ENCODE measurements at regions of chr15 and their contacts with region 1.

Region 1: DNA sequence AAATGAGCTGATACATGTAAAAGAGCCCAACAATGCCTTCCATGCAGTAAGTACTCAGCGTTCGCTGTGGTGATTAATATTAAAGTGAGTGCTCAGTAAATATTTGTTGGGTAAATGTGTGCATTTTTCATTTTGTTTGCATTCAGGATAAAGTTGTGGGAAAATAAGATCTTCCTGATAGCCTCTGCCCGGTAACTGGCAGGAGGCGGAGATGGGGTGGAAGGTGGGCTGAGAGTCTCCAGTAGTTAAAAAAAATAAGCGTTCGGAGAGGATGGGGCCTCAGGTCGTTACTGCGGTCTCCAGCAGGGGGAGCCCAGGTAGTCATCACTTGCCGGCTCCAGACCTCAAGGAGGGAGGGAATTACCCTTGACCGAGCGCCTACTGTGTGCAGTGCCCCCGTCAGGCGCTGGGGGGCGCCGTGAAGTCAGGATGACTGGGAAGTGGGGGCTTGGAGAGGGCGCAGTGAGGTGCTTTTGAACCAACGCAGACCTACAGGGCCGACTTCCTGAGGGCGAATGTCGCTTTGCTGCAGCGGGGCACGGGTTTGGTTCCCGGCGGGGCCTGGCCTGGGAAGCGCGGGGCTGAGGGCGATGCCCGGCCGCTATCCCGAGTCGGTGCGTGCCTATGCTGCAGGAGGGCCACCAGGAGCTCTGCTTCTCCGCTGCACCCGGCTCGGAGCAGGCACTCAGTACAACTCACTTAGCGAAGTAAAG is 80.1 kb downstream of the RHCG start:
- DNase-seq: peak; percentile 99
- ATAC-seq: peak; percentile 80
- H3K4me3 Mint-ChIP-seq: peak overlapping the region; percentile 43
- H3K27ac Mint-ChIP-seq: no peak overlapping the region
- H3K4me1 Mint-ChIP-seq: peaks cover 27% of the 10 kb centered on the region
- H3K27me3 Mint-ChIP-seq: peaks cover 99% of the 10 kb centered on the region
- CTCF ChIP-seq: peak; percentile 99

Region 2: DNA sequence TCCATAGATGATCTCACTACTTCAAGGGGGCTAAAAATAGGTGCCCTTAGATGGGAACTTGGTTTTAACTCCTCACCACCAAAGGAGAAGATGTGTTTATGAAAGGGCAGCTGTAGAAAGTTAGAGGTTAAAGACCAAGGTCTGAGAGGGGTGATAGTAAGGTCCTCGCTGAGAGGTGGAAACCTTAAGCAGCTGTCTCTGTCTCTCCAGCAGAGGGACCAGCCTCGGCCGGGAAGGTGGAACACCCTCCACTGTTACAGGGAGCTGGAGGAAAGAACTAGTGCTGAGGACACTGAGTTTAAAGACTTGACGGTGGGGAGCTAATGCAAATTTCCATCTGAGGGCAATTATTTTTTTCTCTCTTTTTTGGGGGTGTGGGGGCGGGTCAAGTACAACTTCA is 186.0 kb before region 1 on chr15:
- CTCF ChIA-PET with region 1: no interaction called
- POLR2A ChIA-PET with region 1: no interaction called
- DNase-seq: no peak
- ATAC-seq: peak; percentile 79
- H3K4me3 Mint-ChIP-seq: no peak overlapping the region
- H3K27ac Mint-ChIP-seq: no peak overlapping the region
- H3K4me1 Mint-ChIP-seq: no peaks in the 10 kb centered on the region; the same call in 1 of the 2 replicates
- H3K27me3 Mint-ChIP-seq: peaks cover 9% of the 10 kb centered on the region
- CTCF ChIP-seq: no peak

Region 3: GRCh38 chr15:89367485-89368451 is 48.5 kb before region 1 on chr15:
- CTCF ChIA-PET with region 1: interaction called, 26 read pairs
- POLR2A ChIA-PET with region 1: no interaction called
- DNase-seq: peak; percentile 87
- ATAC-seq: peak; percentile 42
- H3K4me3 Mint-ChIP-seq: peak overlapping the region; percentile 61
- H3K27ac Mint-ChIP-seq: no peak overlapping the region
- H3K4me1 Mint-ChIP-seq: peaks cover 29% of the 10 kb centered on the region
- H3K27me3 Mint-ChIP-seq: peaks cover 99% of the 10 kb centered on the region
- CTCF ChIP-seq: no peak

Region 4: DNA sequence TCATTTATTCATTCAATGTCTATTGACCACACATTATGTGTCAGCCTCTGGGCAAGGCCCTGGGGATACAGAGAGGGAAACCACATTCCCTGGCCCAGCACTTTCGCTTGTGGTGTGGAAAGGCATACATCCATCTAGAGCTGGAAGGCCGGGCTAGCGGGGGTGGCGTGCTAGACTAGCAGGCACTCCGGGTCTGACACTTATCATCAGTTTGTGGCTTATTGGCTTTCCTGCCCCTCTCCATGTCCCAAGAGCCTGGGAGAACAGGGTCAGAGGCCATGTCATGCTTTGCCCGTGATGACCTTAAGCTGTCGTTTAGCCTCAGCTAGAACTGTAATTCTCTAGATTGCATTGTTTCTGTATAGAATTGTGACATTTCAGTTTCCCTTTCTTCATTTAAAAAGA is 30.4 kb before region 1 on chr15:
- CTCF ChIA-PET with region 1: interaction called, 28 read pairs
- POLR2A ChIA-PET with region 1: no interaction called
- DNase-seq: no peak
- ATAC-seq: no peak
- H3K4me3 Mint-ChIP-seq: no peak overlapping the region
- H3K27ac Mint-ChIP-seq: no peak overlapping the region
- H3K4me1 Mint-ChIP-seq: peaks cover 38% of the 10 kb centered on the region
- H3K27me3 Mint-ChIP-seq: peaks cover 97% of the 10 kb centered on the region
- CTCF ChIP-seq: no peak

Region 5: DNA sequence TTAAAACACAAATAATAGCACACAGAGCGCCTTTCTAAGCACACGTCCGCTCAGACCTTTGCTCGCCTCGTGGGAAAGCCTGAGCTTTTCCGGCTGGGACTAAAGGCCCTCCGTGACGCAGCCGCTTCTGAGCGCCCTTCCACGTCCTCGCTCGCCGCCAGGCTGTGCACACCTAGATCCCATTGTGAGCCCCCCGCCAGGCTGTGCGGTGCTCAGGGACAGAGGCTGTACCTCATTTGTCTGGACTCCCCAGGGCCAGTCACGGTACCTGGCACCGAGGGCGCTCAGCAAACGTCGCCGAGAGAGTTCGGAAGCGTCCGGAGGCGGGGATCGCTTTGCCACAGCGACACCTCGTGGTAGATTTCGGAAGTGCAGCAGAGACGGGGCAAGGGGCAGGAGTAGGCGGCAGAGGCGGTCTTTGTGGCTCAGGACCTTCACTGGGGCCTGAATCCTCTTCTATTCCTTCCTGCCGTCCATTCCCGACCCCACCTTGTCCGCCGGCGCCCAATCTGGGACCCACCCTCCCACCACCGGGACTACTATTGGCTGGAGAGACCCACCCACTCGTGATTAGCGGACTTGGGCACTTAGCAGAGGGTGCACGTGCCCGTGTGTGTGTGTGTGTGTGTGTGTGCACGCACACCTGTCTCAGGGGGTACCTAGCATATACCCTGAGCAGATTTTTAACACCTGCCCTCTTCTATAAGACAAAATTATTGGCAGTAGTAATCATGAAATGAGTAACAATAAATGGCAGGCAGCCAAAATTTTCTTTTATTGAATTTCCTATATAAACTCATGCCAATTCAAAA is 14.4 kb after region 1 on chr15:
- CTCF ChIA-PET with region 1: interaction called, 65 read pairs
- POLR2A ChIA-PET with region 1: no interaction called
- DNase-seq: peak; percentile 96
- ATAC-seq: peak; percentile 95
- H3K4me3 Mint-ChIP-seq: peak overlapping the region; percentile 72
- H3K27ac Mint-ChIP-seq: no peak overlapping the region
- H3K4me1 Mint-ChIP-seq: peaks cover 15% of the 10 kb centered on the region
- H3K27me3 Mint-ChIP-seq: peaks cover 32% of the 10 kb centered on the region
- CTCF ChIP-seq: peak; percentile 100

Region 6: GRCh38 chr15:89647191-89647851 is 231.0 kb after region 1 on chr15:
- CTCF ChIA-PET with region 1: interaction called, 11 read pairs
- POLR2A ChIA-PET with region 1: no interaction called
- DNase-seq: peak; percentile 95
- ATAC-seq: peak; percentile 90
- H3K4me3 Mint-ChIP-seq: peak overlapping the region; percentile 50
- H3K27ac Mint-ChIP-seq: no peak overlapping the region
- H3K4me1 Mint-ChIP-seq: 0 out of 2 replicates have a peak, but pooled peaks cover 3% of the 10 kb centered on the region
- H3K27me3 Mint-ChIP-seq: no peaks in the 10 kb centered on the region
- CTCF ChIP-seq: peak; percentile 89

Region 7: GRCh38 chr15:89740137-89740536 is 323.8 kb after region 1 on chr15:
- CTCF ChIA-PET with region 1: no interaction called
- POLR2A ChIA-PET with region 1: no interaction called
- DNase-seq: peak; percentile 69
- ATAC-seq: peak; percentile 97
- H3K4me3 Mint-ChIP-seq: no peak overlapping the region
- H3K27ac Mint-ChIP-seq: no peak overlapping the region
- H3K4me1 Mint-ChIP-seq: no peaks in the 10 kb centered on the region
- H3K27me3 Mint-ChIP-seq: peaks cover 4% of the 10 kb centered on the region
- CTCF ChIP-seq: peak; percentile 93

Measured in WTC11 (cell line).